ENCODE measurements at regions of chr20 and their contacts with region 1.

Region 1: GRCh38 chr20:5780846-5781217 is 30.6 kb downstream of the SHLD1 start:
- DNase-seq: no peak
- ATAC-seq: peak; percentile 53

Region 2: DNA sequence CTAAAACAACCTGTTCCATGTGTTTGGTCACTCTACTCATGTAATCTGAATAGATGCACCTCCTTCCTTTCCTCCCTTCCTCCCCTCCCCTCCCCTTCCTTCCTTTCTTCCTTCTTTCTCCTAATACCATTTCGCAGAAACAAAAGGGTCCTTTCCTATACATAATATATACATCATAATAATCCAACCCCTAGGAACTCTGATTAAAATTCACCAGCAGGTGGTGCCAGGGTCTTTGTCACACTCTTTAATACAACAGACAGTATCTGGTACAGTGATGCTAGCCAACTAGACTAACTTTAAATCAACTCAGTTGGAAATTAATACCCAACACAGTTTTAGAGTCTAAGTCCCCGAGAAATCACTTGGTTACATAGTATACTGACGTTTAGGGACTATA is 211.8 kb before region 1 on chr20:
- intact Hi-C with region 1: loop called in 1 of 2 experiments (anchors 5 kb)
- DNase-seq: peak in 1 of 2 donors; percentile 47
- ATAC-seq: peak; percentile 81